ENCODE measurements at regions of chr2 and their contacts with region 1.

Region 1: DNA sequence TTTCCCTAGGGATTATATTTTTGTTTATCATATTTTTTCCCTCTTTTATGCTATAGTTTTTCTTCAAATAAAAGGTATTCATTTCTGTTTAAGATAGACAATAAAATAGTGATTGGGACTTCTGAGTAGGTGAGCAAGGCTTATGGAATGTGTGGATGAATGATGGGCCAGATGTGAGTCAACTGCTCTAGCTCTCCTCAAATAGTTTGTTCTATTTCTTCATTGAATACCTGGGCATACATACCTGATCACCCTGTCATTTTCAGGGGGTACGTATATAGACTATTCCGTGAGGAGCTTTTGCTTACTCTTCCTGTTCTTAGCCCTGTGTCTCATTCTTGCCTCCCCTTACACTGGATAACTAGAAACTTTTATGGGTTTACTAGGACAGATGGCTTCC is 41.9 kb downstream of the BABAM2 start:
- DNase-seq: no peak

Region 2: GRCh38 chr2:26640331-26640745 is 1292.1 kb before region 1 on chr2:
- intact Hi-C with region 1: no loop called
- DNase-seq: peak in 1 of 10 donors; percentile 55

Region 3: DNA sequence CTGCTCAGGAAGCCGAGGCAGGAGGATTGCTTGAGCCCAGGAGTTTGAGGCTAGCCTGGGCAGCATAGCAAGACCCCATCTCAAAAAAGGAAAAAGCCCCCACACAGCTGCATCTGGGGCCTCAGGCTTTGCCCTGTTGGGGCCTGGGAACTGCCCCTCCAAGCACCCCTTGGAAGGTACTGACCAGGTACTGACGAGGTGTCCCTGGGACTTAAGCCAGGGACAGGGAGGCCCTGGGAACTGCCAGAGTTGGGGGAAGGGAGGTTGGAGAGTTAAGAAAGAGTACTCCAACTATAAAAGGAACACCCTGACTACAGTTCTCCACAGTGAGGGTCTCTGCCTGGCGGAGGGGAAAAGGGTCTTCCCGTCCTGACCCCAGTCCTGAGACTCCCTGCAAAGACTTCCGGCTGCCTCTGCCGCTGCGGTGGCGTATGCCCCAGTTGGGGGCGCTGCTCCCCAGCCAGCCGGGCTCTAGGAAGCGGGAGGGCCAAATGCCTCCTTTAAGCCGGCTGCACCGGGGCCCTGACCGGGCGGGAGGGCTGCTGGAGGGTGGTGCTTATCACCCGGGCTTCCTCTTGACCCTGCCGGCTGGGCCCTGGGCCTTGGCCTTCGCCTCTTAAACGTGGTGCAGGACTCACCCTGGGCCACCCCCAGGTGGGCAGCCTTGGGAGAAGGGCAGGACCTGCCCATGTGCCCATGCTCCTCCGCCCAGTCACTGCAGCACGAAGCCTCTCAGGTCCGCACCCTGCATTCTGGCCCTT is 682.3 kb before region 1 on chr2:
- intact Hi-C with region 1: no loop called
- DNase-seq: peak in 7 of 10 donors; percentile 31 to 93 (median 59)

Region 4: GRCh38 chr2:28276076-28276618 is 343.8 kb after region 1 on chr2:
- intact Hi-C with region 1: loop called (anchors 10 kb)
- DNase-seq: no peak

Measured in posterior cingulate gyrus (tissue), 11 donors.